ENCODE measurements at regions of chr4 and their contacts with region 1.

Region 1: DNA sequence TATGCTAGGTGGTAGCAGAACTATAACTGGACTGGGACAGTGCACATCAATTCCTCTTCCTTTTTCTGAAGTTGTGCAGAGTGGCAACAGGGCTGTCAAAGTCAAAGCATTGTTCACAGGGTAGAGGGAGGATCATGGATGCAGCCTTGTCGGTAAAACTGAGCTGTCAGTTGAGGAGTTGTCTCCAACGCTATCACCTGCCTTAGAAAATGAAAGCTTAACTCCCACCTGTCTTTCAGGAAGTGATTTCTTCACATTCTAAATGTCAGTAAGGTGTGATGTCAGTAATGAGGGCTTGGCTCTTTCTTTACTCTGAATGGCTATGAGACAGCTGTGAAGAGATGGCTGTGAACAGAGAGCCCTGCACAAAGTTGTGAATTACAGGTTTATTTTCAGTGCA is 66.4 kb upstream of the BANK1 start:
- DNase-seq: no peak
- ATAC-seq: peak in 1 of 8 donors; percentile 25
- H3K4me3 ChIP-seq: no peak overlapping the region
- H3K27ac ChIP-seq: no peak overlapping the region
- H3K4me1 ChIP-seq: no peaks in the 10 kb centered on the region
- H3K27me3 ChIP-seq: no peaks in the 10 kb centered on the region
- CTCF ChIP-seq: no peak

Region 2: DNA sequence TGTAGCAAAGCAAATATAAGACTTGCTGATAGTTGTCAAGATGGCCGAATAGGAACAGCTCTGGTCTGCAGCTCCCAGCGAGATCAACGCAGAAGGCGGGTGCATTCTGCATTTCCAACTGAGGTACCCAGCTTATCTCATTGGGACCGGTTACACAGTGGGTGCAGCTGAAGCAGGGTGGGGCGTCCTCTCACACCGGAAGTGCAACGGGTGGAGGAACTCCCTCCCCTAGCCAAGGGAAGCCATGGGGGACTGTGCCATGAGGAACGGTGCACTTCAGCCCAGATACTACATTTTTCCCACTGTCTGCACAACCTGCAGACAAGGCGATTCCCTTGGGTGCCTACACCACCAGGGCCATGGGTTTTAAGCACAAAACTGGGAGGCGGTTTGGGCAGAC is 824.0 kb before region 1 on chr4:
- intact Hi-C with region 1: loop called in 2 of 10 experiments (anchors 5 to 10 kb)
- DNase-seq: no peak
- ATAC-seq: no peak
- H3K4me3 ChIP-seq: no peak overlapping the region
- H3K27ac ChIP-seq: no peak overlapping the region
- H3K4me1 ChIP-seq: peaks cover 0 to 3% (median 0%) of the 10 kb centered on the region in 9 donors
- H3K27me3 ChIP-seq: no peaks in the 10 kb centered on the region
- CTCF ChIP-seq: no peak

Region 3: DNA sequence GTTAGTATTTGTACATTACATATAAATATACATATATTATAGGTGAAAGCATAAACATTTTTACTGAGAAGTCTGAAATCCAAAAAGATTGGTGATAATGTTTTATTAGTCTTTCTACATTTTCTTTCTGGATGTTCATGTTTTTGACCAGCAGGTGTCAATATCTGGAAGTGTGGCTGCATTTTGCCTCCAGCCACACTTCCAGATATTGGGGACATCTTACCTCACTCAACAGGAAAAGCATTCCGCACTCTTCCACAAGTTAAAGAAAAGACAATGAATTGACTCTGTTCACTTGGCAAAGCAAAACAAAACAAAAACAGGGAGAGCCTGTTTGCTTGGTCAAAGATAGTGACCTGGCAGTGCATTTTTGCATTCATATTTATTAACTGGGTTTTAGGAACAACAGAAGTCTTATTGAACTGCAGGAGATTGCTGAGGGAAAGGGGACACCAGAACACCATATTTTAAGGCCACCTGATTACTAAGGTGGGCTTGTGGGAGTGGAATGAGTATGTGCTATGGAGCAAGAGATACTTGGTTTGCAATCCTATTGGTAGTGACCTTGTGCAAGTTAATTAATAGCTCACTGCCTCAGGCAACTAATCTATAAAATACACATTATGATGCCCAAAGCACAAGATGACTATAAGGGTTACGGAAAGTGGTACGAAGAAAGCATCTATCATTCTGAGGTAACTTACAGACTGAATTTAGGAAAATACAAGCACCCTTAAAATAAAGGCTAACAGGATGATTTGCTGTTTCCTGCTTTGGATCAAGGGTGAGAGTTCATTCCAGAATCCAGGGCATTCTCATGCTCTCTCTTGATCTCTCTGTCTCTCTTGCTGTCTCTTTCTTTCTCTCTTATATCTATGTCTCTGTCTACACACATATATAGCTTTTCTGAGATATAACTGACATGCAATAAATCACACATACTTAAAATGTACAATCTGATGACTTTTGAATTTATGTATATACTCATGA is 816.3 kb before region 1 on chr4:
- intact Hi-C with region 1: loop called in 2 of 10 experiments (anchors 5 to 10 kb)
- DNase-seq: no peak
- ATAC-seq: no peak
- H3K4me3 ChIP-seq: no peak overlapping the region
- H3K27ac ChIP-seq: no peak overlapping the region
- H3K4me1 ChIP-seq: no peaks in the 10 kb centered on the region
- H3K27me3 ChIP-seq: no peaks in the 10 kb centered on the region
- CTCF ChIP-seq: peak in 7 of 9 donors; percentile 42 to 53 (median 45)

Region 4: DNA sequence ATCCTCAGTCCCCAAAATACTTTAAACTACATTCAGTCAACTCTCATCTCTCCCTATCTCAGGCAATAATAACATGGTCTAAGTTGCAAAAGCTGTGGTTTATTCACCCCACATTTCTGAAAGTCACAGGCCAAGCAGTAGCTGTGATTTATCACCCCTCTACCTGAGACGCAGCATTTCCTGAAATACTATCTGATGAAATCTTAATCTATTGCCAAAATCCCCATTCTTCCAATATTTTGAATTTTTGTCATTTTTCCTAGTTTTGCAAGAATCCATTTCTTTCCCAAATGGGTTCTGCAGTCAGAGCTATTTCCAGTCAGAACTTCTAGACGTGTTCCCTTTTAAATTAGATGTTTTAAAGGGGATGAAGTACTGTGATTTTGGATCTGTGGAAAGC is 214.7 kb after region 1 on chr4:
- intact Hi-C with region 1: no loop called
- DNase-seq: no peak
- ATAC-seq: no peak
- H3K4me3 ChIP-seq: no peak overlapping the region
- H3K27ac ChIP-seq: no peak overlapping the region
- H3K4me1 ChIP-seq: no peaks in the 10 kb centered on the region
- H3K27me3 ChIP-seq: no peaks in the 10 kb centered on the region
- CTCF ChIP-seq: no peak

Region 5: DNA sequence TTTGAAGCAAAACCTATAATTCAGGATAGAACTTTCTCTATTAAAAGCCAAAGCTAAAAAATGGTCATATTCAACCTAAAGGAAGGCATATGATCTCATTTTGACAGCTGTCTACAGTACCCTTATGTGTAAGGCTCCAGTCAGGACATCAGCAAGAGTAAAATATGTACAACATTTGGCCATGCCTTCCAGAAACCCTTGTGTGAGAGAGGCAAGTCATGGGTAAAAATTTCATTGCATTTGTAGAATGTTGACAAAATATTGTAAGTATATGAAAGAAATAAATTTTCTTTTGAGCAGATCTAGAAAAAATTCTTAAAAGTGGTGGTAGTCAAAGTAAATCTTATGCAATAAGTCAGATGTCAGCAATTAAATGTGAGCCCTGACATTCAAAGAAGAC is 488.9 kb after region 1 on chr4:
- intact Hi-C with region 1: no loop called
- DNase-seq: no peak
- ATAC-seq: no peak
- H3K4me3 ChIP-seq: no peak overlapping the region
- H3K27ac ChIP-seq: no peak overlapping the region
- H3K4me1 ChIP-seq: no peaks in the 10 kb centered on the region
- H3K27me3 ChIP-seq: peaks cover 0 to 7% (median 0%) of the 10 kb centered on the region in 7 donors
- CTCF ChIP-seq: no peak

Measured in heart right ventricle (tissue), 16 donors.